ENCODE measurements at regions of chr3 and their contacts with region 1.

Region 1: DNA sequence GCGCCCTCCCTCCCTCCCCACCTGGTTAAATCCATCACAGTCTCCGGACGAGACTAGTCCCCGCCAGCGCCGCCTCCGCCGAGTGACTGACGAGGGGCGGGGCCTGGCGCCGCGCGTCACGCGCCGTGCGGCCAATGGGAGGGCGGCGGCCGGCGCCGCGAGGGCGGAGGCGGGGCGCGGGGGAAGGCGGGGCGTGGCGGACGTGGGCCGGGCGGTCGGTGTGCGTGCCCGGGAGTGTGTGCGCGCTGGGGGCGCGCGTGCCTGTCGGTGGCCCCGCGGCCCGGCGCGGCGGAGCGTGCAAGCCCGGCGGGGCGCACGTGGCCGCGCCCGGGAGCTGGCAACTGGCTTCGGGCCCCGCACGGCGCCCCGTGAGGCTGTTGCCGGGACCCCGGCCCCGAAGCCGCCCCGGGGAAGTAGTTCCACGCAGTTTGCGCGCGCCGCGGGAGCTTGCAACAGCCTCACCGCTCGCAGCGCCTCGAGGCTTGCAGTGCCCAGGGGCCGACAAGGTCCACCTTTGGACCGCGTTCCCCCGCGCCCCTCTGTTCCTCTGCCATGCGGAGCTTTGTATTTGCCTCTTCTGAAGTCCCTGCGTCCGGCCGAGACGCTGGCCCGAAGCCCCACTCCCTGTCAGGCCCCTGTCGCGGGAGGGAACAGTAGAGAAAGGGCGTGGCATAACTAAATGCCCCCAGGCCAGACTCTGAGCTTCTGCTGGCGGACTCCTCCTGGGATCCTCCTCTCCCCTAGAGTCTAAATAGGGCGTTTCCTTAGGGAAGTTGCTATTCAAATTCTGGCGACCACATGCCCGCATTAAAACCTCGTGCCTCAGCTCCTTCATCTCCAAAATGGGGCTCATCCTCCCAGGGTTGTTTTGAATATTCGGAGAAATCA is 400.9 kb downstream of the SHQ1 start:
- DNase-seq: peak; percentile 86 to 98 (median 95)
- ATAC-seq: peak; percentile 99
- H3K4me3 ChIP-seq: peak overlapping the region; percentile 39
- H3K4me3 Mint-ChIP-seq: peak overlapping the region; percentile 47 to 98 (median 74)
- H3K27ac ChIP-seq: peak overlapping the region; percentile 79
- H3K27ac Mint-ChIP-seq: peak overlapping the region; percentile 25 to 83 (median 61)
- H3K4me1 ChIP-seq: peaks cover 23 to 31% of the 10 kb centered on the region in 2 donors
- H3K4me1 Mint-ChIP-seq: peaks cover 37 to 43% (median 41%) of the 10 kb centered on the region in 7 donors
- H3K27me3 ChIP-seq: no peaks in the 10 kb centered on the region
- H3K27me3 Mint-ChIP-seq: peaks cover 0 to 8% (median 6%) of the 10 kb centered on the region in 5 donors

Region 2: DNA sequence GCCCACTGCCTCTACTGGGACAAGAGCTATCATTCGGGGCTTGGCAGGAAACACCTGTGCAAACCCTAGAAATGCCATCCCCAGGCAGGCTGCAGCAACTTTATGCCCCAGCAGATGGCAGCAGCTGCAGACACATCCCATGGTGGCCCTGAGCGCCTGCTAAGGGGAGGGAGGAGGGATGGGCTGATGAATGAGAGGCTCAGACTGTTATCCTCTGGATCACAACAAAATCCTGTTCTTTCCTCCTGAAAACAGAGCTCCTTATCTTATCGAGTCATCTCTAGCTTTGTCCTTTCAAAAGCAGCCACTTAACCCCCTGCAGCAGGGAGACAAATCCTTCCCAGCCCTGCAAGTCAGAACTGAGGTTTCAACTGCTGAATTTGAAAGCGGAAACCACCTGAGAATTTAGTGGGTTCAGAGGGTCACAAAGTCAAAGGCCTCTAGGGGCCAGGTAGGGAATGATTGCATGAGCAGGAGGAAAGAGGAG is 571.8 kb before region 1 on chr3:
- CTCF ChIA-PET with region 1: no interaction called
- POLR2A ChIA-PET with region 1: no interaction called
- intact Hi-C with region 1: loop called (anchors 1 to 10 kb)
- DNase-seq: peak; percentile 55 to 81 (median 73)
- ATAC-seq: peak; percentile 98
- H3K4me3 ChIP-seq: no peak overlapping the region
- H3K4me3 Mint-ChIP-seq: no peak overlapping the region
- H3K27ac ChIP-seq: no peak overlapping the region
- H3K27ac Mint-ChIP-seq: no peak overlapping the region
- H3K4me1 ChIP-seq: no peaks in the 10 kb centered on the region
- H3K4me1 Mint-ChIP-seq: peaks cover 0 to 20% (median 10%) of the 10 kb centered on the region in 7 donors
- H3K27me3 ChIP-seq: no peaks in the 10 kb centered on the region
- H3K27me3 Mint-ChIP-seq: peaks cover 0 to 4% (median 0%) of the 10 kb centered on the region in 5 donors

Region 3: DNA sequence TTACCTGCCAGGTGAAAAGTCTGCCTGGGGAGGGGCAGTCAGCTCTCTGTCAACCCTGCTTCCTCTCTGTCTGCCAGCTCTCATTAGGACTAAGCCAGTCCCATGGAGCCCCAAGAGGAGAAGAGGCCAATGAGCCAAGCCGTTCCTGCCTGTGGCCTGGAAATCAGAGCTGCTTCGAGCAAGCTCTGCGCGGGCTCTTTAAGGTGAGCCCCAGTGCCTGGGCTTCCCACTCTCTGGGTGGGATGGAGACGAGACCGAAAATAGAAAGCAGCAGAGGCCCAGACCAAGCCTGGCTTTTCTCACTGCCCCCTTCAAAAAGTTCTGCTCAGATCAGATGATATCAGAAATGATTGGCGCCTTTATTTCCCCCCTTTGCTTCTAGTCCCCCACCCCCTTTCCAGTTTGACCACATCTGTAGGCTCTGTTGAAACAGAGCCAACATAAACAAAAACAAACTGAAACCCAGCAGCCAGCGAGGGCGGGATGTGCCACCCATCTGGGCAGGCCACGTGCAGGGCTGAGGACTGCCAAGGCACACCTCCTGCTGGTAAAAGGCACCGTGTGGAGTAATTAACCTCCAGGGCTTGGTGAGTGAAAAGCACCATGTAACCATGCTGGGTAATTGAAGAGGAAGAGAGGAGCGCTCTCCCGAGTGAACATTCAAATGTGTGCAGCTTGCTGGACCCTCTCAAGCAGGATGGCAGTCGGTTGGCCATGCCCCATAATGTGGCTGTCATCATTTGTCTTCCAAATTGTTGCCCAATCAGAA is 191.3 kb before region 1 on chr3:
- CTCF ChIA-PET with region 1: no interaction called
- POLR2A ChIA-PET with region 1: no interaction called
- intact Hi-C with region 1: loop called in 1 of 2 experiments (anchors 10 kb)
- DNase-seq: peak in 7 of 9 donors; percentile 33 to 63 (median 53)
- ATAC-seq: peak; percentile 80
- H3K4me3 ChIP-seq: no peak overlapping the region
- H3K4me3 Mint-ChIP-seq: peak overlapping the region in 9 of 10 donors; percentile 41 to 76 (median 68)
- H3K27ac ChIP-seq: no peak overlapping the region
- H3K27ac Mint-ChIP-seq: peak overlapping the region in 8 of 9 donors; percentile 32 to 90 (median 82)
- H3K4me1 ChIP-seq: peaks cover 0 to 45% of the 10 kb centered on the region in 2 donors
- H3K4me1 Mint-ChIP-seq: peaks cover 21 to 62% (median 53%) of the 10 kb centered on the region in 7 donors
- H3K27me3 ChIP-seq: no peaks in the 10 kb centered on the region
- H3K27me3 Mint-ChIP-seq: peaks cover 0 to 8% (median 0%) of the 10 kb centered on the region in 5 donors

Region 4: DNA sequence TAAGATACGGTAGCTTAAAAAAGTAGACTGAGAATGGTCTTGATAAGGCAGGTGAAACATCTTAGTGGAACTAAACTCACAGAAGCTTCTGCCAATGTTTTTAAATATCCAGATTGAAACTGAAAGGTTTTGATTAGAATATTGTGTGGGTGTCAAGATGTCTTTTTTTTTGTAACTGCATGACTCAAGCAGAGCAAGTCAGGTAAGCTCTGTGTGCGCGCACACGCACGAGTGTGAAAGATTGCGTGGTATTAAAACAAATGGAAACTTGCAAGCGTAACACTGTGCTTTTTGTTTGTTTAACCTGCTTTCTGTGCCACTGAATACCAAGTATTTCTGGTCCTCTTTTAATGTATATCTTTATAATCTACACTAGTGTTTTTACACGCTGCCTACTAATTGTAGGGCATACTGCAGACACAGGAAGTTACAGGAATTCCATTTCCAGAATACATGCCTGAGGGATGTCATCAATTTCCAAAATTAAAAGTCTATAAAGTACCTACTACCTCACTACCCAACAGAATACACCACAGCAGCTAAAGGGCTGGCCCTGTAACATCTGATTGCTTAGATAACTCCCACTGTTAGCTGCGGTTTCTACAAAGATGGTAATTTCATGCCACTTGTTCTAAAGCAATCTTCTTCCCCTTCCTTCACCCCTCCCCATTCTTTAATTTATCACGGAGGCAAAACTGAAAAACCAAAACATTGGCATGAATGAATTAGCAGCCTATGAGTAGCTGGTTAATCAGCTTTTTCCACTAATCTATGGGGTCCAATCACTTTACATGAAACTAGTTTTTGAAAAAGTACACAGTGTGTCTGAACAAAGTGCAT is 71.8 kb before region 1 on chr3:
- CTCF ChIA-PET with region 1: interaction called, 3 read pairs
- POLR2A ChIA-PET with region 1: no interaction called
- intact Hi-C with region 1: loop called (anchors 2 kb)
- DNase-seq: peak in 7 of 9 donors; percentile 3 to 50 (median 26)
- ATAC-seq: peak; percentile 82
- H3K4me3 ChIP-seq: no peak overlapping the region
- H3K4me3 Mint-ChIP-seq: peak overlapping the region in 8 of 10 donors; percentile 20 to 76 (median 44)
- H3K27ac ChIP-seq: peak overlapping the region; percentile 33
- H3K27ac Mint-ChIP-seq: peak overlapping the region in 8 of 9 donors; percentile 5 to 77 (median 28)
- H3K4me1 ChIP-seq: peaks cover 0 to 17% of the 10 kb centered on the region in 2 donors
- H3K4me1 Mint-ChIP-seq: peaks cover 10 to 85% (median 65%) of the 10 kb centered on the region in 7 donors
- H3K27me3 ChIP-seq: no peaks in the 10 kb centered on the region
- H3K27me3 Mint-ChIP-seq: no peaks in the 10 kb centered on the region

Region 5: DNA sequence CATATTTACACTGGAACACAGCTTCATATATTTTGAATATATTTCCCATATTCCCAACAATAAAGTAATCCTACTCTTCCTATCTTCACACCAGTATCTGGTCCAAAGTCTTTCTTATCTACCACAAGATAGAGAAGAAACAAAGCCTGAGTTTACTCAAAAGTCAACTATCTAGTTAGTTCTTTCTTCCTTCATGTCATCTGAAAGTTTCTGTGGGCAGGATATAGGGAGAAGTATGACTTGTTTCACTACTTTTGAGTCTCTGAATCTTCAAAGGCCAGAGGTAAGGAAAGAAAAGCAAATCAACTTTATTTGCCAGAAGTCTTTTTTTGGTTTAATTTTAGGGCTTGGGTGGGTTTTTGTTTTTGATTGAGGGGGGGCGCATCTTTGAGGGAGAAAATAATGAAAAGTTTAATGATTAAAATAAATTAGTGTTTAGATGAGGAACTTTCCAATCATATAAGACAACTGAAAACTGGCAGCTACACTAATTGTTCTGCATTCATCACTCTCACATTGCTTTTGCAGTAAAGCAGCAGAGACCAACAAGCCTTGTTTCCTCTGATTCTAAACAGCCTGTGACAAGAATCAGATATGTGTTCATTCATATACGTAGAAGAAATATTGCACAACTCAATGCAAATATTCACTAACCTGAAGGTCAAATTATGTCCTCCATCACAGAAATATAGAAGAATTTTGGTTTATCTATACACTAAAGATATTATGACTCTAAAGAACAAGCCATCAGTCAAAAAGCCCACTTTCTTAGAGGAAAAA is 20.5 kb before region 1 on chr3:
- CTCF ChIA-PET with region 1: interaction called, 4 read pairs
- POLR2A ChIA-PET with region 1: no interaction called
- intact Hi-C with region 1: loop called (anchors 1 to 2 kb)
- DNase-seq: no peak
- ATAC-seq: peak; percentile 24
- H3K4me3 ChIP-seq: no peak overlapping the region
- H3K4me3 Mint-ChIP-seq: peak overlapping the region in 9 of 10 donors; percentile 18 to 63 (median 45)
- H3K27ac ChIP-seq: no peak overlapping the region
- H3K27ac Mint-ChIP-seq: peak overlapping the region in 7 of 9 donors; percentile 6 to 84 (median 51)
- H3K4me1 ChIP-seq: peaks cover 8 to 21% of the 10 kb centered on the region in 2 donors
- H3K4me1 Mint-ChIP-seq: peaks cover 52 to 89% (median 77%) of the 10 kb centered on the region in 7 donors
- H3K27me3 ChIP-seq: no peaks in the 10 kb centered on the region
- H3K27me3 Mint-ChIP-seq: no peaks in the 10 kb centered on the region

Region 6: DNA sequence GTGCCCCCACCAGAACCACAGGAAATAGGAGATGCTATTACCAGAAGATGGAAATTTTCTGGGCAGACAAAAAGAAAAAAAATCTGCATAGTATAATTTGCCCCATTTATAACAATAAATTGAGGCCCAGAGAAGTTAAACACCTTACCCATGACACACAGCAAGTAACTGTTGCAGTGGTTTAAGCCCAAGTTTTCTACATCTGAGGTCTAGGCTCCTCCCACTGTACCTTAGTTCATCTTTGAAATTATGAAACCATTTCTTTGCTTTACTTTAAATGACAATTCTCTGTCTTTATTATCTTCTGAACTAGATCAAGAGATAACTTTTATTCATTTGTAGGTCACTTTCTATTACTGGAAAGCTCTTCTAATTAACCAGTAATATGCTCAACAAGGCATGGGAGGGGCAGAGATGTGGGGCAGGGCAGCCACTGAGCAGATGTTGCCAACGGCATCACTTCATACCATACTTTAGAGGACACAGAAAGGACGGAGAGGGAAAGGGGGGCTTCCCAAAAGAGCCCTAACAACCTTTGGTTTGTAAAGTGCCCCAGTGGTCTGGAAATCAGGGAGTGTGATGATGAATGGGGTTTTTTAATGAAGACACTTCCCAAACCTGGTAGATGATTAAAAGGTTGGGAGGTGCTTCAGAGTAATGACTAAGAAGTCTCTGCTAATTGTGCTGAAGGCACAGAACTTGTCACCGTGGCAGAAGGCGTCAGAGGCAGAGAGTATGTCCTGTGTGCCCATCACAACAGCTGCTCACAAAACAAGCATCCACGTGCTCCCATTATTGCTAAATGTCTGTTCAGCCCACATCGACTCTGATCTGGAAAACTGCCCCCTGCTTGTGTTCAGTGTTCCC is 58.5 kb after region 1 on chr3:
- CTCF ChIA-PET with region 1: no interaction called
- POLR2A ChIA-PET with region 1: no interaction called
- intact Hi-C with region 1: no loop called
- DNase-seq: no peak
- ATAC-seq: no peak
- H3K4me3 ChIP-seq: no peak overlapping the region
- H3K4me3 Mint-ChIP-seq: no peak overlapping the region
- H3K27ac ChIP-seq: no peak overlapping the region
- H3K27ac Mint-ChIP-seq: peak overlapping the region in 1 of 9 donors; percentile 56
- H3K4me1 ChIP-seq: no peaks in the 10 kb centered on the region
- H3K4me1 Mint-ChIP-seq: peaks cover 0 to 4% (median 0%) of the 10 kb centered on the region in 7 donors
- H3K27me3 ChIP-seq: no peaks in the 10 kb centered on the region
- H3K27me3 Mint-ChIP-seq: peaks cover 0 to 6% (median 0%) of the 10 kb centered on the region in 5 donors

Region 7: GRCh38 chr3:72523429-72524151 is 76.3 kb after region 1 on chr3:
- CTCF ChIA-PET with region 1: no interaction called
- POLR2A ChIA-PET with region 1: no interaction called
- intact Hi-C with region 1: no loop called
- DNase-seq: peak in 4 of 9 donors; percentile 3 to 8 (median 5)
- ATAC-seq: peak; percentile 88
- H3K4me3 ChIP-seq: no peak overlapping the region
- H3K4me3 Mint-ChIP-seq: peak overlapping the region in 9 of 10 donors; percentile 2 to 78 (median 63)
- H3K27ac ChIP-seq: no peak overlapping the region
- H3K27ac Mint-ChIP-seq: peak overlapping the region in 3 of 9 donors; percentile 34 to 47 (median 43)
- H3K4me1 ChIP-seq: peaks cover 0 to 14% of the 10 kb centered on the region in 2 donors
- H3K4me1 Mint-ChIP-seq: peaks cover 0 to 33% (median 14%) of the 10 kb centered on the region in 7 donors
- H3K27me3 ChIP-seq: no peaks in the 10 kb centered on the region
- H3K27me3 Mint-ChIP-seq: peaks cover 0 to 4% (median 0%) of the 10 kb centered on the region in 5 donors

Region 8: GRCh38 chr3:72756900-72757299 is 309.6 kb after region 1 on chr3:
- CTCF ChIA-PET with region 1: no interaction called
- POLR2A ChIA-PET with region 1: no interaction called
- intact Hi-C with region 1: loop called (anchors 5 to 10 kb)
- DNase-seq: peak in 8 of 9 donors; percentile 24 to 87 (median 83)
- ATAC-seq: peak; percentile 98
- H3K4me3 ChIP-seq: peak overlapping the region; percentile 37
- H3K4me3 Mint-ChIP-seq: peak overlapping the region; percentile 51 to 84 (median 76)
- H3K27ac ChIP-seq: peak overlapping the region; percentile 68
- H3K27ac Mint-ChIP-seq: peak overlapping the region; percentile 86 to 99 (median 97)
- H3K4me1 ChIP-seq: peaks cover 17 to 49% of the 10 kb centered on the region in 2 donors
- H3K4me1 Mint-ChIP-seq: peaks cover 28 to 89% (median 80%) of the 10 kb centered on the region in 7 donors
- H3K27me3 ChIP-seq: no peaks in the 10 kb centered on the region
- H3K27me3 Mint-ChIP-seq: no peaks in the 10 kb centered on the region

Region 9: DNA sequence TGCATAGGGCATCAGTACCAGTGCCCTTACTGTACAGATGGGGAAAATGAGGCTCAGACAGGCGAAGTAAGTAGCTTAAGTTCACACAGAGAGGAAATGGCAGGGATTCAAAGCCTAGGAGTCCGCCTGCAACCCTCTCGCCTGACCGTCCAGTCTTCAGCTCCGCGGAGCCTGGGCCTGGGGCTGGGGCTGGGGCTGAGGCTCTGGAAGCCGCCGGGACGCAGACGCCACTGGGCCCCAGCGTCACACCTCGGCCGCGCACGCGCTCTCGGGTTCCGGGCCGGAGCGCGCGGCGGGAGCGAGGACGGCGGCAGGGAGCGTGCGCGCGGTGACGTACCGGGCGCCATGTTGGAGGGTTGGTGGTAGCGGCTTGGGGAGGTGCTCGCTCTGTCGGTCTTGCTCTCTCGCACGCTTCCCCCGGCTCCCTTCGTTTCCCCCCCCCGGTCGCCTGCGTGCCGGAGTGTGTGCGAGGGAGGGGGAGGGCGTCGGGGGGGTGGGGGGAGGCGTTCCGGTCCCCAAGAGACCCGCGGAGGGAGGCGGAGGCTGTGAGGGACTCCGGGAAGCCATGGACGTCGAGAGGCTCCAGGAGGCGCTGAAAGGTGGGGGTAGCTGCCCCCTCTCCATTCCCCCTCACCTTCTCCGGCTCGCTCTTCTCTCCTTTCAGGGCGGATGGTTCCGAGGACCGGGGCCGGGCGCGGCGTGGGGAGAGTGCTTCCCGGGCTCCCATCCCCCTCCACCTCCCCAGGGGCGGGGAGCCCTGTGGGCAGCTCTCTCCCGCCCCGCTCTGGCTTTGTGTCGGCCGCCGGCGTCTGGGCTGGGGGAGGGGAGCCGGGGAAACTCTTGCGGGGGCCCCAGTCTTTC is 549.4 kb after region 1 on chr3 and contains the start of gene PPP4R2:
- CTCF ChIA-PET with region 1: no interaction called
- POLR2A ChIA-PET with region 1: no interaction called
- intact Hi-C with region 1: loop called (anchors 2 kb)
- DNase-seq: peak; percentile 90 to 96 (median 94)
- ATAC-seq: peak; percentile 94
- H3K4me3 ChIP-seq: peak within 1 kb of the TSS; percentile 76
- H3K4me3 Mint-ChIP-seq: peak within 1 kb of the TSS; percentile 84 to 95 (median 92)
- H3K27ac ChIP-seq: peak within 1 kb of the TSS; percentile 97
- H3K27ac Mint-ChIP-seq: peak within 1 kb of the TSS; percentile 69 to 97 (median 88)
- H3K4me1 ChIP-seq: peaks cover 26 to 36% of the 10 kb centered on the region in 2 donors
- H3K4me1 Mint-ChIP-seq: peaks cover 30 to 51% (median 44%) of the 10 kb centered on the region in 7 donors
- H3K27me3 ChIP-seq: no peaks in the 10 kb centered on the region
- H3K27me3 Mint-ChIP-seq: no peaks in the 10 kb centered on the region
- total RNA-seq, gene PPP4R2: 56.3 to 87.0 (median 63.8) TPM

Region 10: GRCh38 chr3:73255609-73256029 is 808.3 kb after region 1 on chr3:
- CTCF ChIA-PET with region 1: no interaction called
- POLR2A ChIA-PET with region 1: no interaction called
- intact Hi-C with region 1: no loop called
- DNase-seq: no peak
- ATAC-seq: no peak
- H3K4me3 ChIP-seq: no peak overlapping the region
- H3K4me3 Mint-ChIP-seq: no peak overlapping the region
- H3K27ac ChIP-seq: no peak overlapping the region
- H3K27ac Mint-ChIP-seq: no peak overlapping the region
- H3K4me1 ChIP-seq: no peaks in the 10 kb centered on the region
- H3K4me1 Mint-ChIP-seq: no peaks in the 10 kb centered on the region
- H3K27me3 ChIP-seq: no peaks in the 10 kb centered on the region
- H3K27me3 Mint-ChIP-seq: peaks cover 4 to 39% (median 26%) of the 10 kb centered on the region in 5 donors

Measured in naive thymus-derived CD4-positive, alpha-beta T cell (primary cell).